AG04450 (cell line): ENCODE measurements at regions of chr1 and their contacts with region 1.

Region 1: GRCh38 chr1:66503841-66504470 is 30.0 kb upstream of the SGIP1 start:
- DNase-seq: no peak
- H3K4me3 ChIP-seq: no peak overlapping the region
- H3K27ac ChIP-seq: no peak overlapping the region
- H3K27me3 ChIP-seq: no peaks in the 10 kb centered on the region
- CTCF ChIP-seq: peak; percentile 74

Region 2: GRCh38 chr1:65958561-65959350 is 545.2 kb before region 1 on chr1:
- CTCF ChIA-PET with region 1: interaction called, 12 read pairs
- POLR2A ChIA-PET with region 1: no interaction called
- DNase-seq: peak; percentile 21
- H3K4me3 ChIP-seq: no peak overlapping the region
- H3K27ac ChIP-seq: no peak overlapping the region
- H3K27me3 ChIP-seq: no peaks in the 10 kb centered on the region
- CTCF ChIP-seq: peak; percentile 66

Region 3: DNA sequence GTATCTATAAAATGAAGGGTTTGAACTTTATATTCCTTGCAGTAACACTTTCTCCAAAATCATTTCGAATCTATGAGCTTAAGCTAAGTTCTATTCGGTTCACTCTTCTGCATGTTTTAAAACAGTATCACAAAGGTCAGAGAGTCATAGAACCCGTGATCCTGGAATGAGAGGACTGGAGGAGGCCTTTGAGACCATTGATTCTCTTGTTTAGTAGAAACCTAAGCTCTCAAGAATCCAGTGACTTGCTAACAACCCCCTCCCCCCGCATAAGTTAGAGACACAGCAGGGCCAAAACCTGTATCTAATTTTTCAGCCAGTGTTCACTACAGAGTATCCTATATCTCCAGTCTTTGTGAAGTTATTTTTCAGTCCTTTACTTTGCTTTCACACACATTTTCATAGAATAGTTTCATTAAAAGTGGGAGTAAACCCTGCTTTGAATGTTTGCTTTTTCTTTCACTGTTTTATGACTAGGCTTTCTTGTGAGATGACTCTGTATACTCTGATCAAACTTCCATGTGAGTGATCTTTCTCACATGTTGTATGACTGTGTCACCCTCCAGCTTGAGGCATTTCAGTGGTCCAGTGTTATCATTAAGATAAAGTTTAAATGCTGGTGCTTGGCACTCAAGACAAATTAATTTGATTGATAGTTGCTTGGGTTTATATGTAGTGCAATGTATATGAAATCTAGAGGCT is 245.4 kb before region 1 on chr1:
- CTCF ChIA-PET with region 1: interaction called, 65 read pairs
- POLR2A ChIA-PET with region 1: no interaction called
- DNase-seq: no peak
- H3K4me3 ChIP-seq: no peak overlapping the region
- H3K27ac ChIP-seq: no peak overlapping the region
- H3K27me3 ChIP-seq: no peaks in the 10 kb centered on the region
- CTCF ChIP-seq: no peak

Region 4: DNA sequence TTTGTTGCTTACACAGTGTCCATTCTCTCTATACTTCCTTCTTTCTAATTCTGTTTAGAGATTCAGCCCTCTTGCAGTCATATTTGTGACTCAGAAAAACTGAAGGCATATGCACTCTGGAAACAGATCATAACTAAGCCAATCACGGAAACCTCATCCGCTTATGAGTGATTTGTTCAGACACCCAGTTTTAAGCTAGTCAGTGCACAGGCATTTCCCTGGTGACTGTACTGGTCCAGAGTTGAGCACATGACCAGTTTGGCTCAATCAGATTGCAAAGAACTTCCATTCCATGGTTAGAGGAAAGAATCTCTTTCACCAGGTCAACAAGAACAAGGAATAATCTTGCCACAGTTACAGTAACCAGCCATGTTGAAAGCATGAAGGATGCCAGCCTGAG is 39.2 kb before region 1 on chr1:
- CTCF ChIA-PET with region 1: interaction called, 20 read pairs
- POLR2A ChIA-PET with region 1: no interaction called
- DNase-seq: peak; percentile 92
- H3K4me3 ChIP-seq: no peak overlapping the region
- H3K27ac ChIP-seq: peak overlapping the region; percentile 94
- H3K27me3 ChIP-seq: no peaks in the 10 kb centered on the region
- CTCF ChIP-seq: no peak

Region 5: GRCh38 chr1:66490816-66491215 is 13.1 kb before region 1 on chr1:
- CTCF ChIA-PET with region 1: interaction called, 41 read pairs
- POLR2A ChIA-PET with region 1: interaction called, 5 read pairs
- DNase-seq: no peak
- H3K4me3 ChIP-seq: no peak overlapping the region
- H3K27ac ChIP-seq: no peak overlapping the region
- H3K27me3 ChIP-seq: no peaks in the 10 kb centered on the region
- CTCF ChIP-seq: no peak

Region 6: DNA sequence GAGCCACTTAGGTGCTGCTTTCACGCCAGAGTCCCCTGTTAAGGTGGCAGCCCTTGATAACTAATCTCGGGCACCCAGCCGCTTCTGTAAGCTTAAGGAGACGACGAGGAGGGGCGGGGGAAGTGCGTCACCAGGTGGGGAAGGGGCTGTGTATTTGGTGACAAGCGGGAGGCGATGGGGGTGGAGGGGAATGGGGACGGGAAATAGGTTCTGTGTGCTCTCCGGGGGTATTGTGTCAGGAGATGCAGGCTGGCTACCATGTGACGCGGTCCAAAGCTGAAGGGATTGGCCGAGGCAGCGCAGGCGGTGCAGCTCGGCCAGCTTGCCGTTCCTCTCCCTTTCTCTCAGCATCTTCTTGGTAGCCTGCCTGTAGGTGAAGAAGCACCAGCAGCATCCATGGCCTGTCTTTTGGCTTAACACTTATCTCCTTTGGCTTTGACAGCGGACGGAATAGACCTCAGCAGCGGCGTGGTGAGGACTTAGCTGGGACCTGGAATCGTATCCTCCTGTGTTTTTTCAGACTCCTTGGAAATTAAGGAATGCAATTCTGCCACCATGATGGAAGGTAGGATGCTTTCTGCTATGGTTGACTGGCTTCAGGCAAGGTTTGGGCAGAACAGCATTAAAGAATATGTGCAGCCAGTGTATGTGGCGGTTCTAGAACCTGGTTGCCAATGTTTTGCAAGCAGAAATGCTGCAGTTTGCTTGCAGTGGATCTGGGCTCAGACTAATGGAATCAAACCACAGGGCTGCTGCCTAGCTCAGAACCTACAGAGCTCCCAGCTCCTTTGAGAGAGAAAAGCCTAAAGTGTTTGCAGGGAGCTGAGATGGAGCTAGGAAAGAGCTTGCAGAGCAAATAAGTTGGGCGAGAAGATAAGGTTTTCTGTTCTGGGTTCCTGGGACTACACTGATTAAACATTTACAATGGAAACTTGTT is 30.1 kb after region 1 on chr1 and contains the start of gene SGIP1:
- CTCF ChIA-PET with region 1: interaction called, 66 read pairs
- POLR2A ChIA-PET with region 1: interaction called, 14 read pairs
- DNase-seq: peak; percentile 61
- H3K4me3 ChIP-seq: peak within 1 kb of the TSS; percentile 85
- H3K27ac ChIP-seq: peak within 1 kb of the TSS; percentile 98
- H3K27me3 ChIP-seq: no peaks in the 10 kb centered on the region
- CTCF ChIP-seq: no peak
- polyA plus RNA-seq, gene SGIP1: 85.1 and 110 TPM in 2 replicates

Region 7: DNA sequence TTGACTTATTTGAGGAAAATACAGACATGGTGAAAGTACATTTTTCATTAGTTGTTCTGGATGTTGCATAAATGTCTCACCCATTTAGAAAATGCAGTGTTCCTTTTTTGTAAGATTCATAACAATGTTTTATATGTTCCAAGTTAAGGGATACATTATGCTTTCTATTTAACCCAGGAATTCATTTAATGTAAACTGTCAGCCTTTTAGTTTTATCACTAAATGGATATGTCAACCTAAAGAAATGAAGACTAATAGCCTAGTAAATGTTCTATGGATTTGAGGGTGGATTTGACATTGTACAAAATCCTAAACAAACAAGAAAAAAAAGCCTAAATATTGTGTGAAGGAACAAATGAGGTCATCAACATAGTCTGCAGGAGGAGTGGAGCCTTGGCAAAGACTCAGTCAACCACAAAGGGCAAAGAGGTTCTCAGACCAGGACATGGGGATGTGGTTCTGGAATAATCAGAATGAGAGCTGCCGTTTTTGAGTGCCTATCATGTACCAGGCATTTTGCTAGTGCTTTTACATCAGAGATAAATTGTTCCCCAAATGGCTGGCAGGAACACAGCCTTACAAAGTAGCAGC is 305.9 kb after region 1 on chr1:
- CTCF ChIA-PET with region 1: no interaction called
- POLR2A ChIA-PET with region 1: no interaction called
- DNase-seq: no peak
- H3K4me3 ChIP-seq: no peak overlapping the region
- H3K27ac ChIP-seq: no peak overlapping the region
- H3K27me3 ChIP-seq: peaks cover 6% of the 10 kb centered on the region
- CTCF ChIP-seq: no peak